ENCODE measurements at regions of chr6 and their contacts with region 1.

Region 1: DNA sequence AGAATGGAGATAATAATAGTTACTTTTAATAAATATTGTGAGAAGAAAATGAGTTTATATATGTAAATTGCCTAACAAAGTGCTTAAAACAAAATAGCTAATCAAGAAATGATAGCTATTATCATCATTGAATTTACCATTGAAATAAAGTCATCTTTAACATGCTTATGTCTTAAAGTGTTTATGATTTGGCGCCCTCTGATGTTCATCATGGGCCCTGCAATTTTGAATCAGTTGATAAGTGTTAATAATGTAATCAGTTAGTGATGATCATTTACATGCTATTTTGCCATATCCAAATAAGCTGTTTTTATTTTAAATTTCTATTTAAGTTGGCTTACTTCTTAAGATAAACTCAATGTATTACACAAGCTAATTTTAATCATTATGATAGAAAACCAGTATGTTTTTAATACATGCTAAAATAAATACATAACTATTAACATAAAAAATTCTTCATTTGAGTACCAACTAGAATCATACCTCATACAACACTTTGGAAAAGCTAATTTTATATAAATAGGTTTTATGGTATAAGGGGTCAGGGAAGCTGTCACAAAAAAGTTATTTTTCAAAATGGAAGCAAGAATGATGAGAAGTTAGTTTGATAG is 39.2 kb upstream of the TPD52L1 start:
- DNase-seq: no peak
- ATAC-seq: no peak
- H3K4me3 ChIP-seq: no peak overlapping the region
- H3K27ac ChIP-seq: no peak overlapping the region
- H3K4me1 ChIP-seq: no peaks in the 10 kb centered on the region; the same call in 1 of the 2 replicates
- H3K27me3 ChIP-seq: no peaks in the 10 kb centered on the region
- CTCF ChIP-seq: peak; percentile 72; the same call in 1 of the 2 replicates

Region 2: GRCh38 chr6:124961777-124962611 is 152.4 kb before region 1 on chr6 and contains the start of gene RNF217:
- CTCF ChIA-PET with region 1: no interaction called
- POLR2A ChIA-PET with region 1: no interaction called
- in situ Hi-C with region 1: no loop called
- intact Hi-C with region 1: loop called (anchors 10 kb)
- DNase-seq: no peak
- ATAC-seq: peak; percentile 83
- H3K4me3 ChIP-seq: peak within 1 kb of the TSS; percentile 69
- H3K27ac ChIP-seq: peak within 1 kb of the TSS; percentile 89
- H3K4me1 ChIP-seq: peaks cover 33% of the 10 kb centered on the region
- H3K27me3 ChIP-seq: no peaks in the 10 kb centered on the region
- CTCF ChIP-seq: no peak
- total RNA-seq, gene RNF217: 37.7 TPM

Region 3: DNA sequence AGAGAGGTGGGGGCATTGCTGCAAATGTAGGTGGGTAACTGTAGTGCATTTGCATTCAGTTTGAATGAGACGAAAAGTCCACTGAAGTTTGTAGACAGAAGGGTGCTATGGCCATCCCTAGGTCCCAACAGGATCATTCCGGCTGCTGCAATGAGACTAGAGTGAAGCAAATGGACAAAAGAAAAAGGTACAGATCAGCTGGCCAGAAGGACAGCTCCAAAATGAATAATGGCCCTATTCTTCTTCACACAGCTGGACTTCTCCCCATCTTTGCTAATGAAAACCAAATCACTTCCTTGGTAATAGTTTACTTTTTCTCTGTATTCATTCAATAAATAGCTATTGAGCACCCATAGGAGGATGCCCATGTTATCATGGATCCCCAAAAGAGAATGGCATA is 17.2 kb before region 1 on chr6:
- CTCF ChIA-PET with region 1: interaction called, 10 read pairs
- POLR2A ChIA-PET with region 1: no interaction called
- in situ Hi-C with region 1: no loop called
- intact Hi-C with region 1: no loop called
- DNase-seq: no peak
- ATAC-seq: no peak
- H3K4me3 ChIP-seq: no peak overlapping the region
- H3K27ac ChIP-seq: no peak overlapping the region
- H3K4me1 ChIP-seq: 0 out of 2 replicates have a peak, but pooled peaks cover 6% of the 10 kb centered on the region
- H3K27me3 ChIP-seq: no peaks in the 10 kb centered on the region; the same call in 1 of the 2 replicates
- CTCF ChIP-seq: no peak

Region 4: GRCh38 chr6:126422912-126423311 is 1308.6 kb after region 1 on chr6:
- CTCF ChIA-PET with region 1: no interaction called
- POLR2A ChIA-PET with region 1: no interaction called
- in situ Hi-C with region 1: no loop called
- intact Hi-C with region 1: no loop called
- DNase-seq: no peak
- ATAC-seq: no peak
- H3K4me3 ChIP-seq: no peak overlapping the region
- H3K27ac ChIP-seq: no peak overlapping the region
- H3K4me1 ChIP-seq: no peaks in the 10 kb centered on the region
- H3K27me3 ChIP-seq: no peaks in the 10 kb centered on the region
- CTCF ChIP-seq: no peak